ENCODE measurements at regions of chr2 and their contacts with region 1.

Region 1: DNA sequence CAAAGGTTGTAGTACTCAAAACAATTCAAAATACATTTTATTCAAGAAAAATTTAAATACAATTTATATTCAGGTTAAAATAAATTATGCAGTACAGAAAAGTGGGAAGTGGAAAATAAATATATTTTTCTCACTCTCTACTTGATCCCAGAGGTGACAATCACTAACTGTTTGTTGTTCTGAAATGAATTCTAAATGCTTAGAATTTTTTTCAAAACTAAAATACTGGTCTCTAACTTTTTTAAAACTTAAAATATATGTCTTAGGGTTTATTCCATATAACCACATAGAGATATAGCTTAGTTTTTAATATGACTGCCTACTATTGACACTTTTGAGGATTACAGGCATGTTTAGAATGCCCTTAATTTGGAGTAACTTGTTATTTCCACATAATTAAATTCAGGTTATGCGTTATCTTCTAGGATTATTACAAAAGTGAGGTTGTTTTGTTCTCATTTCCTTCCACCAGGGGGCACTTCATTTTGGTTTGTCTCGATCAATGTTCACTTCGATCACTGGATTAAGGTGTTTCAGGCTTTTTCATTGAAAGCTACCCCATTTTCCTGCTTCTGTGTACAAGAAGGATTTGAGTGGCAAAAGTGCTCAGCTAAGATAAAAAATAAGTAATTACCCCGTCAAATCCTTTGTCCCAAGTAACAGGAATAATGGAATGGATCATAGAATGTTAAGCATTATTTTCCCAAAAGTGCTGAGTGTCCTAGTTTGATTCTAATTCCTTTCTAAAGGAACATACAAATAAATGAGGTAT is 27.1 kb upstream of the TFPI start:
- DNase-seq: peak; percentile 63

Region 2: DNA sequence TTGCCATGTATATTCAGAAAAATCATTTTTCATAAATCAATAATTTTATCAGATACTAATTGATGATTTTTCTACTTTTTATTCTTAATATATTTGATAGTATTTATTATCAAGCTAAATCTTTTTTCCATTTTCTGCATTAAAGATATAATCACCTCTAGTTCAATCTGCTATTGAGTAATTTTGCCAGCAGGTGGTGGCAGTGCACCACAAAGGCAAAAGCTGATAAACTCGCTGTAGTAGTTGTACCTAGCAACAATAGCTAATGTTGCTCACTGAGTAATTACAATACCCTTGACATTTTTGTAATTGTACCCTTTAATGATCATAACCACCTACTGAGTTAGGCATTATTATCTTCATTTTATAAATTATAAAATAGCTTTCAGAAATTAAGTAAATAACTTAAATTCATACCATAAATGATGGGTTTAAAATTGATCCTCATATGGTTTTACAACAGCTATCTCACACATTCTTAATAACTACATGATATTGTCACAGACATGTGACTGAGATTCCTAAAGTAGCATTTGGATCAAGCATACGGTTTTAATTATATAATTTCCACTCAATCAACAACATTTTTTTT is 81.3 kb before region 1 on chr2:
- in situ Hi-C with region 1: loop called (anchors 10 kb)
- DNase-seq: peak; percentile 75

Region 3: GRCh38 chr2:187774551-187775071 is 193.3 kb after region 1 on chr2:
- in situ Hi-C with region 1: no loop called
- DNase-seq: no peak